GM12878 (cell line): ENCODE measurements at regions of chr1 and their contacts with region 1.

Region 1: DNA sequence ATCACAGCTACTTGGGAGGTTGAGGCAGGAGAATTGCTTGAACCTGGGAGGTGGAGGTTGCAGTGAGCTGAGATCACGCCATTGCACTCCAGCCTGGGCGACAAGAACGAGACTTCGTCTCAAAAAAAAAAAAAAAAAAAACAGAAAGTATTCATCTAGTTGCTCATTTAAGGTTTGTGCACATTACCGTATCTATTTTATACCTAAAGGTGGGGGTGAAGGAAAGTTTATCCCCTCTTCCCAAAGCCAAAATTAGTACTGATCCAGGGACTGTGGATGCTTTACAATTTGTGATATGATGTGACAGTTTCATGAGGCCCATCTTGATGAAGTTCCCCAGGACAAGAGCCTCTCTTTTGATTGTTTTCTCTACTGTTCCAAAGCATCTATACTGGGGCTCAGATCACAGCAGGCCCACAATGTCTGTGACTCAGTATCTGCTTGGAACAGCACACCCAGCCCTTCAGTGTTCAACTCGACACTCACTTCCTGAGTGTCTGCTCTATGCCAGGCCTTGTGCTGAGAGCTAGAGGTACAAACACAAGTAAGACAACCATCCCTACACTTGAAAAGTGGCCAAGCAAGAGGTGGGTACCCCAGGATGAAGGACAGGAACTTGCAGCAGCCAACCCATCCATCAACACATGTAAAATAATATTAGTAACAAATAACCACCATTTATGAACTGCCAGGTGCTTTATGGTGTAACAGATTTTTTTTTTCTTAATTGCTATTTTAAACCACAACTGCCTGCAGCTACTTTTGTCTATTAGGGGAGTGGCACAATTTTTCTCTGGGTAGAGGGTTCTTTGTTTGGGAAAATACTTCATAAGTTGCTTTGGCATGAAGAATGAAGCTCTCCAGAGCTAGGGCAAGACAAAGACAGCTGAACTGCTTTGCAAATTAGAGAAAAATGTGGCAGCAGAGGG is 29.0 kb upstream of the KHDRBS1 start:
- DNase-seq: no peak
- ATAC-seq: peak; percentile 40
- H3K4me3 ChIP-seq: peak overlapping the region; percentile 48; the same call in 1 of the 2 replicates
- H3K27ac ChIP-seq: peak overlapping the region; percentile 77
- H3K4me1 ChIP-seq: peaks cover 32% of the 10 kb centered on the region
- H3K27me3 ChIP-seq: no peaks in the 10 kb centered on the region
- CTCF ChIP-seq: no peak
- EP300 ChIP-seq: no peak
- POLR2A ChIP-seq: peak; percentile 60
- RAD21 ChIP-seq: no peak

Region 2: GRCh38 chr1:31944205-31945089 is 40.2 kb before region 1 on chr1:
- CTCF ChIA-PET with region 1: interaction called, 4 read pairs
- POLR2A ChIA-PET with region 1: interaction called, 7 read pairs
- RAD21 ChIA-PET with region 1: interaction called, 5 read pairs
- SMC1A ChIA-PET with region 1: interaction called, 15 read pairs
- in situ Hi-C with region 1: no loop called
- intact Hi-C with region 1: no loop called
- DNase-seq: peak; percentile 75
- ATAC-seq: peak; percentile 85
- H3K4me3 ChIP-seq: peak overlapping the region; percentile 78
- H3K27ac ChIP-seq: peak overlapping the region; percentile 94
- H3K4me1 ChIP-seq: peaks cover 38% of the 10 kb centered on the region
- H3K27me3 ChIP-seq: no peaks in the 10 kb centered on the region
- CTCF ChIP-seq: no peak
- EP300 ChIP-seq: 0 out of 4 replicates have a peak, but pooled peaks of 1 of the 2 experiments have one; percentile 25
- POLR2A ChIP-seq: peak; percentile 99
- RAD21 ChIP-seq: no peak; the same call in 1 of the 2 replicates

Region 3: DNA sequence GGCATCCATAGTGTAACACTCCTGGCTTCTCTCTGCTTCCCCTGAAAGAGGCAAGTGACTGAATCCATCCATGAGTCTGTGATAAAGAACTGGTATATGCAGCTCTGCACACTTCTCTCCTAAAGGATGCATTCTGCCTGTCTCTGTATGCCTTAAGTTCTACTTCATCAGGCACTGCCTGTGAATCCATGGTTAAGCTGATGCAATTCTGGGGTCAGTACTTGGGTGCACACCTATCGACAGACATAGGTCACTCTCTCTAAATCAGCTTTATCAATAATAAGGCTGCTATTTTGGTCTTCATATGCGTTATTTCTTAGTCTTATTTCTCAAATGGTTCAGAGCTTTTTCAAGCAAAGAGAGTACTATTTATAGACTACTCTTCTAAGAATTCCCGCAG is 13.8 kb before region 1 on chr1:
- CTCF ChIA-PET with region 1: interaction called, 18 read pairs
- POLR2A ChIA-PET with region 1: interaction called, 6 read pairs
- RAD21 ChIA-PET with region 1: interaction called, 6 read pairs
- SMC1A ChIA-PET with region 1: interaction called, 45 read pairs
- in situ Hi-C with region 1: no loop called
- intact Hi-C with region 1: no loop called
- DNase-seq: no peak
- ATAC-seq: no peak
- H3K4me3 ChIP-seq: no peak overlapping the region
- H3K27ac ChIP-seq: no peak overlapping the region
- H3K4me1 ChIP-seq: no peaks in the 10 kb centered on the region
- H3K27me3 ChIP-seq: no peaks in the 10 kb centered on the region
- CTCF ChIP-seq: no peak
- EP300 ChIP-seq: no peak
- POLR2A ChIP-seq: no peak
- RAD21 ChIP-seq: no peak

Region 4: GRCh38 chr1:32013386-32014198 is 28.9 kb after region 1 on chr1 and contains the start of gene KHDRBS1:
- CTCF ChIA-PET with region 1: interaction called, 5 read pairs
- POLR2A ChIA-PET with region 1: interaction called, 9 read pairs
- RAD21 ChIA-PET with region 1: interaction called, 8 read pairs
- SMC1A ChIA-PET with region 1: interaction called, 8 read pairs
- in situ Hi-C with region 1: no loop called
- intact Hi-C with region 1: loop called (anchors 5 kb)
- DNase-seq: peak; percentile 98
- ATAC-seq: peak; percentile 87
- H3K4me3 ChIP-seq: peak within 1 kb of the TSS; percentile 99
- H3K27ac ChIP-seq: peak within 1 kb of the TSS; percentile 94
- H3K4me1 ChIP-seq: 0 out of 2 replicates have a peak, but pooled peaks cover 4% of the 10 kb centered on the region
- H3K27me3 ChIP-seq: no peaks in the 10 kb centered on the region
- CTCF ChIP-seq: no peak
- EP300 ChIP-seq: 0 out of 4 replicates have a peak, but pooled peaks of 1 of the 2 experiments have one; percentile 29
- POLR2A ChIP-seq: peak; percentile 95
- RAD21 ChIP-seq: no peak
- polyA plus RNA-seq, gene KHDRBS1: 42.5 to 97.6 TPM

Region 5: DNA sequence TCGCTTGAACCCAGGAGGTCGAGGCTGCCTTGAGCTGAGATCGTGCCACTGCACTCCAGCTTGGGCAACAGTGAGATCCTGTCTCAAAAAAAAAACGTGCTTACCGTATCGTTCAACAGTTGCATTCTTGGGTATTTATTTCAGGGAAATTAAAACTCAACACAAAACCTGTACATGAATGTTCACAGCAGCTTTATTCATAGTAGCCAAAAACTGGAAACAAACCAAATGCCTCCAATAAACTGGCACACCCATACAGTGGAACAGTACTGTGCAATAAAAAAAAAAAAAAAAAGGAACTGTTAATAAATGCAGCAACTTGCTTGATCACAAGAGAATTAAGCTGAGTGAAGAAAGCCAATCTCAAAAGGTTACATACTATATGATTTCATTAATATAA is 35.7 kb after region 1 on chr1:
- CTCF ChIA-PET with region 1: interaction called, 5 read pairs
- POLR2A ChIA-PET with region 1: interaction called, 16 read pairs
- RAD21 ChIA-PET with region 1: interaction called, 5 read pairs
- SMC1A ChIA-PET with region 1: interaction called, 8 read pairs
- in situ Hi-C with region 1: no loop called
- intact Hi-C with region 1: loop called (anchors 5 kb)
- DNase-seq: no peak
- ATAC-seq: no peak
- H3K4me3 ChIP-seq: peak overlapping the region; percentile 52; the same call in 1 of the 2 replicates
- H3K27ac ChIP-seq: no peak overlapping the region
- H3K4me1 ChIP-seq: peaks cover 25% of the 10 kb centered on the region
- H3K27me3 ChIP-seq: no peaks in the 10 kb centered on the region
- CTCF ChIP-seq: no peak
- EP300 ChIP-seq: no peak
- POLR2A ChIP-seq: no peak
- RAD21 ChIP-seq: no peak